GM10248 (cell line): ENCODE measurements at regions of chr17 and their contacts with region 1.

Region 1: DNA sequence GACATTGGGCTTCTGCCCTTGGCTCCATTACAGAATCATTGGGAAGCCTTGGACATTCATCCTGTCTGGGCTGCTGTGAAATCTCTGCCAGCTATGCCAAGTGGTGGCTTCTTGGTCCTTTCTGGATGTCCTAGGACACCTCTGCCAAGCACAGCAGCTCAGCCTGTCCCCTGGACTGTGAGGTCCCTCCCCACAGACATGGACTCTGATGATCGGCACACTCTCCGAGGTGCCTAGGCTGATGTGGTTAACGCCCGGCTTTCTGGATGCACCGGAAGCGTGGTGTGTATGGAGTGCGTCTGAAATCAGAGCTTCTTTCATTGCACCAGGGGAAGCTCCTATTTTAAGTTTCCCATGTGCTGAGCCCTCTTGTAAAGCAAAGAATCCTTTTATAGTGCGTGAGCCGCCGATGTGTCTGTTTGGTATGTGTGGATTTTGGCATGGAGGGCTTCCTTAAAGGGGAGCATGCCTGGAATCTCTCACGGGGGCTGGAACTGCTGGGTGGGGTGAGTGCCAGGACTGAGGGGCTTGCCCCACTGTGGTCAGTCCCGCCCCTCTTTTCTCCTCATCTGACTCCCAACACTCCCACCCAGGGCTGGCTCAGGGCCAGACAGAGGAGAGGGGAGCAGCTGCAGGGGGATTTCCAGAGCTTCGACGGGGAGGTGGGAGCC is 7.0 kb upstream of the ARHGAP23 start:
- DNase-seq: no peak
- CTCF ChIP-seq: no peak

Region 2: GRCh38 chr17:38431346-38432145 is 10.2 kb after region 1 on chr17:
- CTCF ChIA-PET with region 1: interaction called, 10 read pairs
- POLR2A ChIA-PET with region 1: no interaction called
- DNase-seq: no peak
- CTCF ChIP-seq: no peak

Region 3: DNA sequence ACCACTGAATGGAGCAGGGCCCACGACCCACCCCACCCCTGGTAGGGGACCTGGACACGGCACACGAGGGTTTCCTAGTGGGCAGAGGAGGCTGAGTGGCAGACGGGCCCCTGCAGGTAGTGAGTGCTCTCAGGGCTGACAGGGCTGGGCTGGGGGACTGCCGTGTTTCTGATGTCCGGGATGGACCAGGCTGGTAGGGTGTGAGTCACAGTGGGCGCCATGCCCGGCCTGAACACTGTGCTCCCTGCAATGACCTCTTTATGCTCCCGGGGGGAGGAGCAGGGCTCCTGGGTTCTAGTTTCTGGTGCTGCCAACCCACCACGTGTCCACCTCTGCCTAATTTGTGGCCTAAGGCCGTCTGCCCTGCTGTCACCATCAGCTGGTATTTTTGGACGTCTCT is 33.2 kb after region 1 on chr17:
- CTCF ChIA-PET with region 1: no interaction called
- POLR2A ChIA-PET with region 1: no interaction called
- DNase-seq: no peak
- CTCF ChIP-seq: no peak